ENCODE measurements at regions of chr9 and their contacts with region 1.

Region 1: DNA sequence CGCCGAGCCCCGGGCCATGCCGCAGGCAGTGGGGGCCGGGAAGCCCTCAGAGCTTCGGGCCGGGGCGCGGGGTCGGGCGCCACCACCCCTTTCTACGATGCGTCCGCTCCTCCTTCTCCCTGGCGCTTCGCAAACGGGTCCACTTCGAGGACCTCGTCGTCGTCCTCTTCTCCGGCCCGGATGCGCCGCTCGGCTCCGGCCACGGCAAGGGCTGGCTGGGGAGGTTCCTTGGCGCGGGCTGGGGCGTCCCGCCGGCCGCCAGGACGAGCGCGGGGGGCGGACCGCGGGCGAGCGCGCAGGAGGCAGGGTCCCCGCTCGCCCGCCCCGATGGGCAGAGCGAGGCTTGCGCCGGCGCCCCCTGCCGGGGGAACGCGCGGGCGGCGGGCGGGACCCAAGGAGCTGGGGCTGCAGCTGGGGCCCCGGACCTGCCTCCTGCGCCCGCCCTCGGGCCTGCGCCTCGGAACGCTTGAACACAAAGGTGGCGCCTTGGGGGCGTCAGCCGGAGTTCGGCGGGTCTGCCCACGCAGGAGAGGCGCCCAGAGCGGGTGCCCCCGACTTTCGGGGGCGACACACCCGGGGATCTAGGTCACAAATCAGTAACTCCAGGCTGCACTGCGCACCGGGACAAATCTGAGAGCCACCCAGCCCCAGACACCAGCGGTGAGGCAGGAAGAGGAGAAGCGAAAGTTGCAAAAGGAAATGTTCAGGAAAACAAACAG is at the start of gene ROR2:
- DNase-seq: peak; percentile 72
- H3K4me3 Mint-ChIP-seq: peak within 1 kb of the TSS; percentile 74
- H3K27ac Mint-ChIP-seq: no peak within 1 kb of the TSS
- H3K4me1 Mint-ChIP-seq: peaks cover 16% of the 10 kb centered on the region
- H3K27me3 Mint-ChIP-seq: peaks cover 74% of the 10 kb centered on the region
- total RNA-seq, gene ROR2: 2.1 TPM

Region 2: DNA sequence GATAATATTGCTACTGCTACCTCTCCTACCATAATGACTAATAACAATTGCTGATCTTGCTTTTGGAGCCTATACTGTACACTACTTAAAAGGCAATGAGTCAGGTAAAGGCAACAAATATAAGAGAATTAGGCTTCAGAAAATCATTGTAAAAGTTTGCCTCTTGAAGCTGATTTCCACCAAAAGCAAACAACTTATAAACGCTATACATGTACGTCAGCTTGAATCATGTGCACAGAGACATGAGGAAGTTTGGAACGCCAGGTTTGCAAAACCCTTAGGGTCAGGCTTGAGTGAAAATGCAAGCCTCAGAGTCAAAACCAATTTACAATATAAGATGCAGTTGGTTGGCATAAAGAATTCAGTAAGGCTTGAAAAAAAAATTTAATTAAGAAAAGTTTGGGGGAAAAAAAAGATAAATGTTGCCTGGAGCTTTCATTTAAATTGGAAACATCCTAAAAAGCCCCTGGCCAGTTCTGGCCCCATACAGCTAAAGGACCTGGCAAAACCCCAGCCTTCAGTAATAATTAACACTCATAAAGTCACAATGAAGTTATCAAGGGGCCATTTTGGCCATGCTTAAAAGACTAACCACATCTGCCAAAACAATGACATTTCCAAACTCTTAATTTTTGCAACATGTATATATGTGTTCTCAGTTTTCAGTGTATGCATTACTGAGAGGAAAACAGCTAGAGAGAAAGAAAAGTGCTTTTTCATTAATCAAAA is 345.5 kb before region 1 on chr9:
- CTCF ChIA-PET with region 1: no interaction called
- POLR2A ChIA-PET with region 1: no interaction called
- DNase-seq: no peak
- H3K4me3 Mint-ChIP-seq: no peak overlapping the region
- H3K27ac Mint-ChIP-seq: no peak overlapping the region
- H3K4me1 Mint-ChIP-seq: no peaks in the 10 kb centered on the region
- H3K27me3 Mint-ChIP-seq: peaks cover 15% of the 10 kb centered on the region

Region 3: GRCh38 chr9:91775011-91775707 is 174.9 kb before region 1 on chr9:
- CTCF ChIA-PET with region 1: interaction called, 21 read pairs
- POLR2A ChIA-PET with region 1: interaction called, 3 read pairs
- DNase-seq: peak; percentile 78
- H3K4me3 Mint-ChIP-seq: no peak overlapping the region
- H3K27ac Mint-ChIP-seq: no peak overlapping the region
- H3K4me1 Mint-ChIP-seq: peaks cover 11% of the 10 kb centered on the region
- H3K27me3 Mint-ChIP-seq: peaks cover 22% of the 10 kb centered on the region

Region 4: GRCh38 chr9:91905995-91906469 is 44.1 kb before region 1 on chr9:
- CTCF ChIA-PET with region 1: interaction called, 17 read pairs
- POLR2A ChIA-PET with region 1: interaction called, 3 read pairs
- DNase-seq: peak; percentile 87
- H3K4me3 Mint-ChIP-seq: no peak overlapping the region
- H3K27ac Mint-ChIP-seq: no peak overlapping the region
- H3K4me1 Mint-ChIP-seq: peaks cover 23% of the 10 kb centered on the region
- H3K27me3 Mint-ChIP-seq: peaks cover 11% of the 10 kb centered on the region

Region 5: GRCh38 chr9:91935066-91935749 is 14.9 kb before region 1 on chr9:
- CTCF ChIA-PET with region 1: interaction called, 15 read pairs
- POLR2A ChIA-PET with region 1: no interaction called
- DNase-seq: no peak
- H3K4me3 Mint-ChIP-seq: no peak overlapping the region
- H3K27ac Mint-ChIP-seq: no peak overlapping the region
- H3K4me1 Mint-ChIP-seq: peaks cover 9% of the 10 kb centered on the region
- H3K27me3 Mint-ChIP-seq: peaks cover 3% of the 10 kb centered on the region

Region 6: GRCh38 chr9:91967267-91967666 is 17.2 kb after region 1 on chr9:
- CTCF ChIA-PET with region 1: interaction called, 23 read pairs
- POLR2A ChIA-PET with region 1: no interaction called
- DNase-seq: no peak
- H3K4me3 Mint-ChIP-seq: no peak overlapping the region
- H3K27ac Mint-ChIP-seq: no peak overlapping the region
- H3K4me1 Mint-ChIP-seq: no peaks in the 10 kb centered on the region
- H3K27me3 Mint-ChIP-seq: peaks cover 37% of the 10 kb centered on the region

Region 7: GRCh38 chr9:92001244-92001643 is 51.1 kb after region 1 on chr9:
- CTCF ChIA-PET with region 1: no interaction called
- POLR2A ChIA-PET with region 1: no interaction called
- DNase-seq: no peak
- H3K4me3 Mint-ChIP-seq: no peak overlapping the region
- H3K27ac Mint-ChIP-seq: no peak overlapping the region
- H3K4me1 Mint-ChIP-seq: no peaks in the 10 kb centered on the region
- H3K27me3 Mint-ChIP-seq: peaks cover 17% of the 10 kb centered on the region

Measured in activated CD4-positive, alpha-beta memory T cell treated with anti-CD3 and anti-CD28 coated beads, Interleukin-2, amount 10 ng/mL, durations not matched to agents 7 days and 5 days (primary cell).